Common myeloid progenitor, CD34-positive (primary cell): ENCODE measurements at regions of chr22 and their contacts with region 1.

Region 1: GRCh38 chr22:44625981-44626687 is 75.9 kb upstream of the PRR5 start:
- DNase-seq: peak; percentile 67 to 81 (median 76)
- H3K4me3 ChIP-seq: no peak overlapping the region
- H3K27ac ChIP-seq: no peak overlapping the region
- H3K4me1 ChIP-seq: peaks cover 0 to 5% (median 2%) of the 10 kb centered on the region in 4 experiments
- H3K27me3 ChIP-seq: no peaks in the 10 kb centered on the region

Region 2: DNA sequence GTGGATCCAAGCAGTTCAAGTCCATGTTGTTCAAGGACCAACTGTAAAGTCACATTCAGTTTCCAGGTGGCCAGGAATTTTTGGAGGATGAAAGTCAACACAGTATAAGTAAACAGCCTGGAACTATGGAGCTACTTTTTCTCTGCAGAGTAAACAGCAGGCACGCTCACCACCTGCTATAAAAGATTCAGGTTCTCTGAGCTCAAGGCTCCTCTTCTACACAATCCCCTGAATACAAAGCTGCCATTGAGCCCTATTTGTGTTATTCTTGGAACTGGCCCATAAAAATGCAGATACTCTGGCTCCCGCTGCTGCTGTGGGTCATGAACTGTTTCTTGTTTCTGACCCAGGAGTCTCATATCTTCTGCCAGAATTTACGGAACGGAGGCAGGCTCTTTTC is 18.9 kb after region 1 on chr22:
- CTCF ChIA-PET with region 1: interaction called, 11 read pairs
- POLR2A ChIA-PET with region 1: interaction called, 3 read pairs
- DNase-seq: no peak
- H3K4me3 ChIP-seq: no peak overlapping the region
- H3K27ac ChIP-seq: no peak overlapping the region
- H3K4me1 ChIP-seq: peaks cover 0 to 19% (median 14%) of the 10 kb centered on the region in 4 experiments
- H3K27me3 ChIP-seq: no peaks in the 10 kb centered on the region